ENCODE measurements at regions of chr10 and their contacts with region 1.

Region 1: GRCh38 chr10:125719146-125720001 is at the start of gene EDRF1:
- DNase-seq: peak; percentile 98 to 100 (median 99)
- ATAC-seq: peak; percentile 94
- H3K4me3 ChIP-seq: peak within 1 kb of the TSS; percentile 78 to 93
- H3K4me3 Mint-ChIP-seq: peak within 1 kb of the TSS; percentile 99
- H3K27ac ChIP-seq: peak within 1 kb of the TSS; percentile 91 to 94
- H3K27ac Mint-ChIP-seq: peak within 1 kb of the TSS; percentile 99
- H3K4me1 ChIP-seq: peaks cover 39% of the 10 kb centered on the region
- H3K4me1 Mint-ChIP-seq: peaks cover 36% of the 10 kb centered on the region
- H3K27me3 ChIP-seq: no peaks in the 10 kb centered on the region
- H3K27me3 Mint-ChIP-seq: no peaks in the 10 kb centered on the region
- CTCF ChIP-seq: no peak
- total RNA-seq, gene EDRF1: 46.9 to 49.0 TPM

Region 2: GRCh38 chr10:125363791-125364190 is 355.6 kb before region 1 on chr10:
- CTCF ChIA-PET with region 1: no interaction called
- POLR2A ChIA-PET with region 1: no interaction called
- intact Hi-C with region 1: no loop called
- DNase-seq: no peak
- ATAC-seq: no peak
- H3K4me3 ChIP-seq: no peak overlapping the region
- H3K4me3 Mint-ChIP-seq: no peak overlapping the region
- H3K27ac ChIP-seq: no peak overlapping the region
- H3K27ac Mint-ChIP-seq: no peak overlapping the region
- H3K4me1 ChIP-seq: no peaks in the 10 kb centered on the region
- H3K4me1 Mint-ChIP-seq: no peaks in the 10 kb centered on the region
- H3K27me3 ChIP-seq: no peaks in the 10 kb centered on the region
- H3K27me3 Mint-ChIP-seq: no peaks in the 10 kb centered on the region
- CTCF ChIP-seq: no peak

Region 3: GRCh38 chr10:125822878-125823662 is 103.7 kb after region 1 on chr10 and contains the starts of genes BCCIP and UROS:
- CTCF ChIA-PET with region 1: no interaction called
- POLR2A ChIA-PET with region 1: interaction called, 11 read pairs
- intact Hi-C with region 1: loop called (anchors 1 kb)
- DNase-seq: peak; percentile 80 to 96 (median 90)
- ATAC-seq: peak; percentile 87
- H3K4me3 ChIP-seq: peak within 1 kb of the TSS; percentile 79 to 92
- H3K4me3 Mint-ChIP-seq: no peak within 1 kb of the TSS
- H3K27ac ChIP-seq: peak within 1 kb of the TSS; percentile 90 to 96
- H3K27ac Mint-ChIP-seq: peak within 1 kb of the TSS; percentile 68
- H3K4me1 ChIP-seq: peaks cover 42% of the 10 kb centered on the region
- H3K4me1 Mint-ChIP-seq: peaks cover 39% of the 10 kb centered on the region
- H3K27me3 ChIP-seq: no peaks in the 10 kb centered on the region
- H3K27me3 Mint-ChIP-seq: no peaks in the 10 kb centered on the region
- CTCF ChIP-seq: no peak
- total RNA-seq, gene BCCIP: 41.3 to 42.0 TPM
- total RNA-seq, gene UROS: 17.7 to 20.7 TPM

Region 4: GRCh38 chr10:125840406-125841353 is 121.3 kb after region 1 on chr10:
- CTCF ChIA-PET with region 1: no interaction called
- POLR2A ChIA-PET with region 1: no interaction called
- intact Hi-C with region 1: no loop called
- DNase-seq: no peak
- ATAC-seq: no peak
- H3K4me3 ChIP-seq: no peak overlapping the region
- H3K4me3 Mint-ChIP-seq: no peak overlapping the region
- H3K27ac ChIP-seq: no peak overlapping the region
- H3K27ac Mint-ChIP-seq: no peak overlapping the region
- H3K4me1 ChIP-seq: no peaks in the 10 kb centered on the region
- H3K4me1 Mint-ChIP-seq: no peaks in the 10 kb centered on the region
- H3K27me3 ChIP-seq: no peaks in the 10 kb centered on the region
- H3K27me3 Mint-ChIP-seq: no peaks in the 10 kb centered on the region
- CTCF ChIP-seq: no peak

Measured in CD8-positive, alpha-beta T cell (primary cell).